ENCODE measurements at regions of chr1 and their contacts with region 1.

Region 1: GRCh38 chr1:229430761-229431283 is 3.1 kb downstream of the ACTA1 start:
- DNase-seq: peak; percentile 81
- H3K4me3 Mint-ChIP-seq: peak overlapping the region; percentile 64
- H3K27ac Mint-ChIP-seq: peak overlapping the region; percentile 77
- H3K4me1 Mint-ChIP-seq: peaks cover 12% of the 10 kb centered on the region
- H3K27me3 Mint-ChIP-seq: peaks cover 78% of the 10 kb centered on the region

Region 2: DNA sequence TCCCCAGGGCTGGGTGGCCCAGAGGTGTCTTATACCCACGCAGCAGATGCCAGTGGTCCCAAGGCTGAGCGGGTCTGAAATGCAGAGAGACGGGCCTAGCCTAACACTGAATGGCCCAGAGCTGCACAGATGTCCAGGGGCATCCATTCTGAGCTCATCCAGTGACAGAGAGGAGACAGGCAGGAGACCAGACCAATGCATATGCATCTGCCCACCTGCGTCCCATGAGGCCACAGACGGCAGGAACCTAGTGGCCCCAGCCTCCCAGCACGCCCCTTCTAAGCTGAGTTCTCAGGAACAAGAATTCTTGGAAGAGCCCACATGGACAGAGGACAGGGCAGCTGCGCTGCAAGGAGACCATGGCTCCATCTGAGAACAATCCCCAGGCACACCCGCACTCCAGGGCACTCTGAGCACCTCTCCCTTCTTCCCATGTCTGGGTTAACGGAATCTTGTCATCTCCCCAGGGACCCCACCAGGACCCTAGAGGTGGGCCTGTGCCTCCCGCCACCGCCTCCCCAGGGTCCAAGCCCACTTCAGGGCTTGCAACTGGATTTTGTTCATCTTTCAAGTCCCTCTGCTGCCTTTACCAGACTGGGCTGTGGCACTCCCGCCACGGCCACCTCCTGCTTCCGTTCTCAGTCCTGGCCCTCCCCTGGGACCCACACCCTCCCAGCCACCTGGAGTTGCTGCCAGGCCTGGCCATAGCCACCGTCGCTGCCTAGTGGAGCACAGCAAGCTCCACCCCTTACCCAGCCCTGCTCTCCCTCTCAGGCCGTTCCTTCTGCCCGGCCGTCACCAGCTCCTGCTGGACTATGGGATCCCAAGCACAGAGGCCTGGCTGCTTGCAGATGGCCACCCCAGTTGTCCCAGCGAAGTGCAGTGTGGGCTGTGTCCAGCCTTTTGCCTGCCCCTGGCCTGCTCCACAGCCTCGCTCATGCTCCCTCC is 1420.7 kb before region 1 on chr1:
- intact Hi-C with region 1: loop called (anchors 5 kb)
- DNase-seq: no peak
- H3K4me3 Mint-ChIP-seq: peak overlapping the region; percentile 72
- H3K27ac Mint-ChIP-seq: no peak overlapping the region
- H3K4me1 Mint-ChIP-seq: peaks cover 8% of the 10 kb centered on the region
- H3K27me3 Mint-ChIP-seq: peaks cover 40% of the 10 kb centered on the region

Region 3: DNA sequence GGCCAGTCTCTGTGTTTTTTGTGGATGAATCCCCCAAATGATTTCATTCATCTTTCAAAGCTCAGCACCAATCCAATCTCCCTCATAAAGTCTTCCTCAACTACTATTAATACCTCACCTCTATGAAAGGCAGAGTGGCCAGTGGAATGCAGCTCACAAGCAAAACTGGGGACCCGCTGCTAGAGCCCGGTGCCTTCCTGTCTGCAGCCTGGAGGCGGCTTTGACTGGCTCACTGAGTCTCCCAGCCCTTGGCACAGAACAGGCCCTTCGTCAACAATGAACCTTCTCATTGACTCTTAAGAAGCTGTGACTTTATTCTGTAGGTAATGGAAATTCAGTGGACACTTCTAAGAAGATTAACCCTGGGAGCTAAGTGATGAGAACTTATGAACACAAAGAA is 246.8 kb before region 1 on chr1:
- intact Hi-C with region 1: no loop called
- DNase-seq: no peak
- H3K4me3 Mint-ChIP-seq: no peak overlapping the region
- H3K27ac Mint-ChIP-seq: no peak overlapping the region
- H3K4me1 Mint-ChIP-seq: peaks cover 11% of the 10 kb centered on the region
- H3K27me3 Mint-ChIP-seq: no peaks in the 10 kb centered on the region

Region 4: DNA sequence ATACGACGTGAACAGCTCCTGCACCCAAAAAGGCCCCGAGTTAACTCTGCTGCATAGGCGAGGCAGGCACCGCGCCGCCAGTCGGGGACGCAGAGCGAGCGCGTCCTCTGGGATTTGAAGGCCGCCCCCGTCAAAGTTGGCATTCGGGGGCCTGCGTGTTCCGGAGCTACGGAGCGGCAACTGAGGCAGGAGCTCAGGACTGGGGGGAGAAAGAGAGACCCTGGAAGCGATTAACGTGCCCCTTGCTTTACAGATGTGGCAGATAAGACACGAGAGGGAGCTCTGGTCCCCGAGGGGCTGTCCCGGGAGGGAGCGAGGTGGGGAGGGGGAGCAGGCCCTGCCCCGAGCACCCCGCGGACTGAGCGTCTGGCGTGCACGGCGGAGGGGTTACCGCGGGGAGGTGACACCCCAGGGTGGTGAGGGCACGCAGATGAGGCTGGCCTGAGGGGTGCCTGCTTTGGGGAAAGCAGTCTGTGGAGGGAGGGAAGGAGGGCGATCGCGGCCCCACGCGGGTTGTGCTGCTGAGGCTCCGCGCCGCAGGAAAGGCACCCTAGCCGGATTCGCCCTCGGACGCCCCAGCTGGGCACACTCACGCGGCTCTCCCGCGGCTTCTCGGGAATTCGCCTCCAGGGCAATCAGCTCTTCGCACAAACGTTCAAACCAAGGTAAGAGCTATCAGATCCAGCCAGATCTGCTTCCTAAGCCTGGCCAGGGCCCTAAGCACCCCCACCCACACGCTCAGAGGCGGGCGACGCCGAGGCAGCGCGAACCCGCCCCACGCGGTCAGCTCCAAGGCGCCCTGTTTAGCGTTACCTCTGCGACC is 23.4 kb before region 1 on chr1:
- intact Hi-C with region 1: loop called (anchors 2 kb)
- DNase-seq: peak; percentile 60
- H3K4me3 Mint-ChIP-seq: peak overlapping the region; percentile 61
- H3K27ac Mint-ChIP-seq: no peak overlapping the region
- H3K4me1 Mint-ChIP-seq: peaks cover 15% of the 10 kb centered on the region
- H3K27me3 Mint-ChIP-seq: peaks cover 63% of the 10 kb centered on the region

Region 5: GRCh38 chr1:229452956-229453801 is 22.4 kb after region 1 on chr1:
- intact Hi-C with region 1: no loop called
- DNase-seq: no peak
- H3K4me3 Mint-ChIP-seq: no peak overlapping the region
- H3K27ac Mint-ChIP-seq: no peak overlapping the region
- H3K4me1 Mint-ChIP-seq: peaks cover 6% of the 10 kb centered on the region
- H3K27me3 Mint-ChIP-seq: no peaks in the 10 kb centered on the region

Region 6: GRCh38 chr1:230426246-230427093 is 995.6 kb after region 1 on chr1 and contains the start of gene PGBD5:
- intact Hi-C with region 1: loop called (anchors 5 kb)
- DNase-seq: peak; percentile 92
- H3K4me3 Mint-ChIP-seq: peak within 1 kb of the TSS; percentile 79
- H3K27ac Mint-ChIP-seq: peak within 1 kb of the TSS; percentile 39
- H3K4me1 Mint-ChIP-seq: peaks cover 13% of the 10 kb centered on the region
- H3K27me3 Mint-ChIP-seq: peaks cover 61% of the 10 kb centered on the region
- total RNA-seq, gene PGBD5: 0.09 TPM in 1 of 2 replicates, not detected in the other

Measured in activated CD4-positive, alpha-beta T cell treated with anti-CD3 and anti-CD28 coated beads, Interleukin-2, amount 10 ng/mL, durations not matched to agents 24 days and 14 days (primary cell).